Naive thymus-derived CD4-positive, alpha-beta T cell (primary cell): ENCODE measurements at regions of chr10 and their contacts with region 1.

Region 1: GRCh38 chr10:43120929-43121314 is 17.3 kb upstream of the CSGALNACT2 start:
- DNase-seq: peak in 6 of 9 donors; percentile 22 to 71 (median 36)
- ATAC-seq: peak; percentile 94
- H3K4me3 ChIP-seq: no peak overlapping the region
- H3K4me3 Mint-ChIP-seq: peak overlapping the region in 8 of 10 donors; percentile 42 to 80 (median 56)
- H3K27ac ChIP-seq: no peak overlapping the region
- H3K27ac Mint-ChIP-seq: peak overlapping the region; percentile 42 to 96 (median 80)
- H3K4me1 ChIP-seq: peaks cover 13 to 15% of the 10 kb centered on the region in 2 donors
- H3K4me1 Mint-ChIP-seq: peaks cover 19 to 56% (median 21%) of the 10 kb centered on the region in 7 donors
- H3K27me3 ChIP-seq: no peaks in the 10 kb centered on the region
- H3K27me3 Mint-ChIP-seq: no peaks in the 10 kb centered on the region

Region 2: DNA sequence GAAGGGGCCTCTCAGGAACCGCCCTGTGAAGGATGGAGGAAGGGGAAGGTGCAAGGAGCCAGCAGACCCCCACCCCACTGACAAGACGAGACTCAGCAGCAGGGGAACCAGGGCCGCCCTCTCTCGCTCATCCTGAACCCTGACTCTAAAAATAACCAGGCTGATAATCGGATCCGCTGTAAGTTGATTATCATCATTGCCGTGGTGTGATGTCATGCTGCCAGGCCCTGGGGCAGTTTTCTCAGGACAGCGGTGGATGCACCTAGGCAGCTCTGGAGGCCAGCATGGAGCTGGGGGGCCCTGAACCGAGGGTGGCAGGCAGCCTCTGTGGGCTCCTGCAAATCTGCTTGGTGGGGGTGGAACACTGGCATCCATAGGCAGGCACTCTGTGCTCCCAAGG is 36.1 kb before region 1 on chr10:
- CTCF ChIA-PET with region 1: no interaction called
- POLR2A ChIA-PET with region 1: no interaction called
- intact Hi-C with region 1: loop called in 1 of 2 experiments (anchors 1 kb)
- DNase-seq: no peak
- ATAC-seq: no peak
- H3K4me3 ChIP-seq: no peak overlapping the region
- H3K4me3 Mint-ChIP-seq: no peak overlapping the region
- H3K27ac ChIP-seq: no peak overlapping the region
- H3K27ac Mint-ChIP-seq: peak overlapping the region in 1 of 9 donors; percentile 19
- H3K4me1 ChIP-seq: no peaks in the 10 kb centered on the region
- H3K4me1 Mint-ChIP-seq: peaks cover 0 to 9% (median 0%) of the 10 kb centered on the region in 7 donors
- H3K27me3 ChIP-seq: no peaks in the 10 kb centered on the region
- H3K27me3 Mint-ChIP-seq: peaks cover 5 to 16% (median 14%) of the 10 kb centered on the region in 5 donors

Region 3: DNA sequence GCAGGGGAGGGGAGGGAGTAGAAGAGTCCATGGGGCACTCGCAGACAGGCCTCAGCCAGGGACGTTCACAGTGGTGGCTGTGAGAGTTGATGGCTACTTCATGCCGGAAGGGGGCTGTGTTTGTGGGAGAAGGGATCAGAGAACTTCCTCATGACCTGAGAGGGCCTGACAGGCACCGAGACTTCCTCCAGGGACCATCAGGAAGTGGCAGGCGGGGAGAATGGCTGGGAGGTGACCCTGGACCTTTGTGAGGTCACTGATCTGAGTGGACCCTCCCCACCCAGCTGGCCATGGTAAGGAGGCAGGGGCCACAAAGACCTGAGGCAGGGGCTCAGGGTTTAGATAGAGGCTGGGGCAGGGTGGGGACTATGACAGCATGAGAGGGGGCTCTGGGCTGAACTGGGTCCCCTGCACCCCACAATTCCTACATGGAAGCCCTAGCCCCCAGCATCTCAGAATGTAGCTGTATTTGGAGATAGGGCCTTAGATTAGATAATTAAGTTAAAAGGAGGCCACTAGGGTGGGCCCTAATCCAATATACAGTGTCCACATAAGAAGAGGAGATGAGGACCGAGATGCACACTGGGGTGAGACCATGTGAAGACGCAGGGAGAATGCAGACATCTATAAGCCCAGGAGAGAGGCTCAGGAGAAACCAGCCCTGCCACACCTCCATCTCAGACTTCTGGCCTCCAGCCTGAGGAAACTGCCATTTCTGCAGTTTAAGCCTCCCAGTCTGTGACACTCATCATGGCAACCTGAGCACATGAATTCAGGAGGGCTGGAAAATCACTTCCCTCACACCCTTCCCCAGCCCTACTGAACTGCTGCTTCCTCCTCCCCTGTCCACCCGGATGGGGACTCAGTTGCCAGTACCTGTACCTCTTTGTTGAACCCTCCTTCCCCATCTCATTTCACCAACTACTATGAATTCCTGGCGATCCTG is 801.7 kb after region 1 on chr10:
- CTCF ChIA-PET with region 1: no interaction called
- POLR2A ChIA-PET with region 1: no interaction called
- intact Hi-C with region 1: no loop called
- DNase-seq: peak in 1 of 9 donors; percentile 11
- ATAC-seq: no peak
- H3K4me3 ChIP-seq: no peak overlapping the region
- H3K4me3 Mint-ChIP-seq: no peak overlapping the region
- H3K27ac ChIP-seq: no peak overlapping the region
- H3K27ac Mint-ChIP-seq: peak overlapping the region in 1 of 9 donors; percentile 39
- H3K4me1 ChIP-seq: no peaks in the 10 kb centered on the region
- H3K4me1 Mint-ChIP-seq: peaks cover 0 to 2% (median 0%) of the 10 kb centered on the region in 7 donors
- H3K27me3 ChIP-seq: no peaks in the 10 kb centered on the region
- H3K27me3 Mint-ChIP-seq: peaks cover 0 to 15% (median 3%) of the 10 kb centered on the region in 5 donors